Activated CD4-positive, alpha-beta memory T cell treated with anti-CD3 and anti-CD28 coated beads, Interleukin-2, amount 10 ng/mL, durations not matched to agents 7 days and 5 days (primary cell): ENCODE measurements at regions of chr10 and their contacts with region 1.

Region 1: GRCh38 chr10:100508691-100509150 is 10.9 kb downstream of the SEC31B start:
- DNase-seq: peak; percentile 62
- H3K4me3 Mint-ChIP-seq: peak overlapping the region; percentile 80
- H3K27ac Mint-ChIP-seq: peak overlapping the region; percentile 94
- H3K4me1 Mint-ChIP-seq: peaks cover 93% of the 10 kb centered on the region
- H3K27me3 Mint-ChIP-seq: no peaks in the 10 kb centered on the region

Region 2: DNA sequence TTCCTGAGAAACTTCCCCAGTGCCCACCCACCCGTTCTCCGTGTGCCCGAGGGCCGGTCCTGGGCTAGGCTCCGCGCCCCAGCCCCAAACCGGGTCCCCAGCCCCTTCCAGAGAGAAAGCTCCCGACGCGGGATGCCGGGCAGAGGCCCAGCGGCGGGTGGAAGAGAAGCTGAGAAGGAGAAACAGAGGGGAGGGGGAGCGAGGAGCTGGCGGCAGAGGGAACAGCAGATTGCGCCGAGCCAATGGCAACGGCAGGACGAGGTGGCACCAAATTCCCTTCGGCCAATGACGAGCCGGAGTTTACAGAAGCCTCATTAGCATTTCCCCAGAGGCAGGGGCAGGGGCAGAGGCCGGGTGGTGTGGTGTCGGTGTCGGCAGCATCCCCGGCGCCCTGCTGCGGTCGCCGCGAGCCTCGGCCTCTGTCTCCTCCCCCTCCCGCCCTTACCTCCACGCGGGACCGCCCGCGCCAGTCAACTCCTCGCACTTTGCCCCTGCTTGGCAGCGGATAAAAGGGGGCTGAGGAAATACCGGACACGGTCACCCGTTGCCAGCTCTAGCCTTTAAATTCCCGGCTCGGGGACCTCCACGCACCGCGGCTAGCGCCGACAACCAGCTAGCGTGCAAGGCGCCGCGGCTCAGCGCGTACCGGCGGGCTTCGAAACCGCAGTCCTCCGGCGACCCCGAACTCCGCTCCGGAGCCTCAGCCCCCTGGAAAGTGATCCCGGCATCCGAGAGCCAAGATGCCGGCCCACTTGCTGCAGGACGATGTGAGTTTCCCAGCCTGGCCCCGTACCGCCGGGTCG is 161.8 kb before region 1 on chr10 and contains the start of gene SCD:
- CTCF ChIA-PET with region 1: interaction called, 18 read pairs
- POLR2A ChIA-PET with region 1: interaction called, 64 read pairs
- DNase-seq: peak; percentile 93
- H3K4me3 Mint-ChIP-seq: peak within 1 kb of the TSS; percentile 96
- H3K27ac Mint-ChIP-seq: peak within 1 kb of the TSS; percentile 74
- H3K4me1 Mint-ChIP-seq: peaks cover 65% of the 10 kb centered on the region
- H3K27me3 Mint-ChIP-seq: no peaks in the 10 kb centered on the region
- total RNA-seq, gene SCD: 198 to 202 TPM

Region 3: DNA sequence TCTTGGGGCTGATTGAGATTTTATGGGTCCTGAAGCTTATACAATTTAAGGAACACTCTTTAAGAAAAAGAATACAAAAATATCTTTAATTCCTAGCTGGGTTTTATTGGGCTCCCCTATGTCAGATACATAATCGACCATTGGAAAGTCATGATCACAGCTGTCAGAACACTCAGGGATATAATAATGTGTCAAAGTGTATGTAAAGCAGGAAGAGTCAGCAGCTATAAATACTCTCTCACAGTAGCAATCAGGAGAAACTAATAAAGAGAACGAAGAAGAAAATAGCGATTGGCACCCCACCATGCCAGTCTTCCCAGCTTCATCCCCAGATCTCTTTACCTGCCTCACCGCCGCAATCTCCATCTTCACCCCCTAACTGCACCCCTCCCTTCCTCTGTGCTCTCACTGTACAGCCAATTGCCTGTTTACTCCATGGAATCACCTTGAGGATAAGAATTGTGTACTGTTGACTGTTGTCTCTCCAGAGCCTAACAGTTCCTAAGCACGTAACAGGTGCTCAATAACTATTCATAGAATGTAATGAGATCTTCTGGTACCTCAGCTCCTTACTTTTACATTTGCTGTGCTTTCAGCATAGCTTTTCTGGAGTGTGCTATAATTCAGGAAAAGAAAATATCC is 69.9 kb before region 1 on chr10:
- CTCF ChIA-PET with region 1: interaction called, 114 read pairs
- POLR2A ChIA-PET with region 1: interaction called, 9 read pairs
- DNase-seq: no peak
- H3K4me3 Mint-ChIP-seq: no peak overlapping the region
- H3K27ac Mint-ChIP-seq: no peak overlapping the region
- H3K4me1 Mint-ChIP-seq: peaks cover 4% of the 10 kb centered on the region
- H3K27me3 Mint-ChIP-seq: peaks cover 2% of the 10 kb centered on the region

Region 4: DNA sequence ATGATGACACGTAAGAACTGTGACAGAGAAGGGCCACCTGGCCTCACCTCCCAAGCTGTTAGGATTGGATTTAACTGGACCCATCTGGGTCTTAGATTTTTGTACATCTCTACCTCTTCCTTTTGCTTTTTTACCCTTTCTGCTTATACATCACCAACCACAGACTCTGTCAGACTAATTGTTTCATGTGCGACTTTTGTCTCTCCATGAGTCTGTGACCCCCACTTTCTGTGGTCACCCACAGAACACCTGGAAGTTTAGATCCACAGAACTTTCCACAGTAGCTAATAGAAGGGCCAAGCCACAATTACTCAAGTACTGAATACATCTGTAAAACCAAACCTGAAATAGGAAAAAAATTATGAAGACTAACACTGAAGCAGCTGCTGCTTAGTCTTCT is 12.2 kb before region 1 on chr10:
- CTCF ChIA-PET with region 1: interaction called, 15 read pairs
- POLR2A ChIA-PET with region 1: interaction called, 96 read pairs
- DNase-seq: no peak
- H3K4me3 Mint-ChIP-seq: no peak overlapping the region
- H3K27ac Mint-ChIP-seq: peak overlapping the region; percentile 17
- H3K4me1 Mint-ChIP-seq: peaks cover 51% of the 10 kb centered on the region
- H3K27me3 Mint-ChIP-seq: no peaks in the 10 kb centered on the region

Region 5: GRCh38 chr10:100529475-100530298 is 21.0 kb after region 1 on chr10 and contains the start of gene NDUFB8:
- CTCF ChIA-PET with region 1: interaction called, 94 read pairs
- POLR2A ChIA-PET with region 1: interaction called, 135 read pairs
- DNase-seq: peak; percentile 90
- H3K4me3 Mint-ChIP-seq: peak within 1 kb of the TSS; percentile 90
- H3K27ac Mint-ChIP-seq: peak within 1 kb of the TSS; percentile 95
- H3K4me1 Mint-ChIP-seq: peaks cover 41% of the 10 kb centered on the region
- H3K27me3 Mint-ChIP-seq: no peaks in the 10 kb centered on the region
- total RNA-seq, gene NDUFB8: 315 to 324 TPM